ENCODE measurements at regions of chr2 and their contacts with region 1.

Region 1: DNA sequence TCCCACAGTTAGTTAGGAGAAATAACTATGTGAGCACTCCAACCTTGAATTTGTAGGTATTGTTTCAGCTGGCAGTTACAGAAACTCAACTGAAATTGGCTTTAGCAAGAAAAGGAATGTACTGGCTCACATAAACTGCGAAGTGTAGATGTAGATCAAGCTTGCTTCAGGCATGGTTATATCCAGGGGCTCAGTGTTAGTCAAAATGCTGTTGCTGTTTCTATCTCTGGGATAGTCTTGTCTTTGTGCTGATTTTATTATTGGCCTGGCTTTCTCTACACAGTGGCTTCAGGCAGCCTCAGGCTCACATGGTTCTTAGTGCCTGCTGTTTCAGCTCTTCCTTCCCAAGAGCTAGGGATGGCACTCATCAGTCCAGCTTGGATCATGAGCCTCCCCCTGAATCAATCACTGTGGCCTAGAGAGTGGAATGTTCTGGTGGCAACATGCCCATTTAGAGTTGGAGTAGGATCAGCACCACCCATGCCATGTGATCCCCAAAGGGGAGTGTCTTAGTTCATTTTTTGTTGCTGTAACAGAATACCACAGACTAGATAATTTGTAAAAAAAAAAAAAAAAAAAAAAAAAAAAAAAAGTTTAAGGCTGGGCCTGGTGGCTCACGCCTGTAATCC is 69.1 kb upstream of the FOXI3 start:
- DNase-seq: peak; percentile 33
- H3K4me3 ChIP-seq: no peak overlapping the region
- H3K27ac ChIP-seq: no peak overlapping the region
- H3K4me1 ChIP-seq: no peaks in the 10 kb centered on the region
- H3K27me3 ChIP-seq: no peaks in the 10 kb centered on the region
- CTCF ChIP-seq: no peak

Region 2: DNA sequence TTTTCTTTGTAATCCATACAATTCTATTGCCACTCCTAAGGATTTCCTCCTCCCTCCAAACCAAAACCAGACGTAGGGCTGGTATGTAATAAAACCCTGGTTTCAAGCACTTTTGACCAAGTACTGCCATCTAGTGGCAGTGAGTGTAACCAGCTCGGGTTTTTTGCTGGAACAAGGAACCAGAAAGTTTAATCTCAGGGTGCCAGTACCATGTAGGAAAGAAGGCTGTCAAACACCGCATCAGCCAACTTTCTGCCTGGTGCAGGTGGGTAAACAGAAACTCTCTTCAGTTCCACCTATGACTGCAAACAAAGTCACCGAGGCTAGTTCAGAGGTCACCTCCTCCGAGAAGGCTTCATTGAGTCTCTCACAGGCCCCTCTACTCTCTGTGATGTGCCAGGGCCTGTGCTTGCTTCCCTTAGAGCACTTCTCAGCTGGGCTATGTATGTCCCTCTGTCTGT is 361.6 kb before region 1 on chr2:
- CTCF ChIA-PET with region 1: no interaction called
- dilution Hi-C with region 1: no loop called
- in situ Hi-C with region 1: no loop called
- intact Hi-C with region 1: no loop called
- DNase-seq: peak; percentile 49
- H3K4me3 ChIP-seq: no peak overlapping the region
- H3K27ac ChIP-seq: no peak overlapping the region
- H3K4me1 ChIP-seq: peaks cover 9% of the 10 kb centered on the region
- H3K27me3 ChIP-seq: no peaks in the 10 kb centered on the region
- CTCF ChIP-seq: peak; percentile 88 to 89

Region 3: GRCh38 chr2:88408528-88409269 is 112.9 kb before region 1 on chr2:
- CTCF ChIA-PET with region 1: no interaction called
- dilution Hi-C with region 1: no loop called
- in situ Hi-C with region 1: no loop called
- intact Hi-C with region 1: no loop called
- DNase-seq: peak; percentile 6
- H3K4me3 ChIP-seq: no peak overlapping the region
- H3K27ac ChIP-seq: no peak overlapping the region
- H3K4me1 ChIP-seq: no peaks in the 10 kb centered on the region
- H3K27me3 ChIP-seq: peaks cover 2% of the 10 kb centered on the region
- CTCF ChIP-seq: no peak

Region 4: DNA sequence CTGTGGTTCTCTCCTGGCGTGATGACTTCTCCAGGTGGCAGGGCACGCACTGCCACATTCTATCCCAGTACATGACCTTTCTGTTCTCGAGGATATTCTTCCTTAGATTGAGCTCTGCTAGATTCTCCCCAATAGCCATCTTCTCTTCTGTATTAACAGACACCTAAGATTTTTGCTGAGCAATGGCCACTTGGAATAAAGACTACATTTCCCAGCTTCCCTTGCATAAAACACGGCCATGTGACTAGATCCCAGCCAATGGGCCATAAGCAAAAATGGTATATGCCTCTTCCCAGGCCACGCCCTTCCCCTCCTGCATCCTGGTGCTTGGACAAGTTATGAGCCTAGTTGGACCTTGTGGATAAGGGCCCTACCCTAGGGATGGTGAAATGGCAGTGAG is 23.6 kb after region 1 on chr2:
- CTCF ChIA-PET with region 1: no interaction called
- dilution Hi-C with region 1: no loop called
- in situ Hi-C with region 1: no loop called
- intact Hi-C with region 1: no loop called
- DNase-seq: peak; percentile 38
- H3K4me3 ChIP-seq: no peak overlapping the region
- H3K27ac ChIP-seq: no peak overlapping the region
- H3K4me1 ChIP-seq: peaks cover 6% of the 10 kb centered on the region
- H3K27me3 ChIP-seq: no peaks in the 10 kb centered on the region
- CTCF ChIP-seq: no peak

Region 5: DNA sequence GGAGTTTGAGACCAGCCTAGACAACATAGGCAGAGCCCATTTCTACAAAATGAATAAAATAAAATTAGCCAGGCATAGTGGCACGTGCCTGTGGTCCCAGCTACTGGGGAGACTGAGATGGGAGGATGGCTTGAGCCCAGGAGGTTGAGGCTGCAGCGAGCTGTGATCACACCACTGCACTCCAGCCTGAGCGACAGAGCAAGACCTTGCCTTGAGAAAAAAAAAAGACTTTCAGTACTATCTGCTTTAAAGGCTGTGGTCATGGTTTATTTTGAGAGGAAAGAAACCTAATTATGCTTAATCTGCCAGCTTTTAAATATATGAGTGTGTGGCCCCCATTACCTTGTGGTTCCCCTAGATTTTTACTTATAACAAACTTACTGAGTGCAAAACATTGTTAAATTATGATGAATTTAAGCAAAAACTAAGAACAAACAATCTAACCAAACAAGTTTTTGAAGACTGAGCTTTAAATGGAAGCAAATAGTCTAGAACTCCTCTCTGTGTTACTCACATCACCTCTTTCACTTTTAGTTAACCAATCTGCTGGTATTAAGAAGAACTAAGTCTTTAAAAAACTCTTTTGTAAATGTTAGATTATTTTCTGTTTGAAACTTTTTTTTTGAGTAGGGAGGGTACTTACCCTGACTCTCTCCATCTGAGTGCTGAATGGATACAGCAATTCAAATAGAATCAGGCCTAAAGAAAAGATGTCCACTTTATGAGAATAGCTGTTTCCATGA is 40.3 kb after region 1 on chr2:
- CTCF ChIA-PET with region 1: no interaction called
- dilution Hi-C with region 1: loop called (anchors 5 kb)
- in situ Hi-C with region 1: no loop called
- intact Hi-C with region 1: no loop called
- DNase-seq: no peak
- H3K4me3 ChIP-seq: no peak overlapping the region
- H3K27ac ChIP-seq: no peak overlapping the region
- H3K4me1 ChIP-seq: no peaks in the 10 kb centered on the region
- H3K27me3 ChIP-seq: no peaks in the 10 kb centered on the region
- CTCF ChIP-seq: no peak